Gastrocnemius medialis (tissue), 4 donors: ENCODE measurements at regions of chrX and their contacts with region 1.

Region 1: DNA sequence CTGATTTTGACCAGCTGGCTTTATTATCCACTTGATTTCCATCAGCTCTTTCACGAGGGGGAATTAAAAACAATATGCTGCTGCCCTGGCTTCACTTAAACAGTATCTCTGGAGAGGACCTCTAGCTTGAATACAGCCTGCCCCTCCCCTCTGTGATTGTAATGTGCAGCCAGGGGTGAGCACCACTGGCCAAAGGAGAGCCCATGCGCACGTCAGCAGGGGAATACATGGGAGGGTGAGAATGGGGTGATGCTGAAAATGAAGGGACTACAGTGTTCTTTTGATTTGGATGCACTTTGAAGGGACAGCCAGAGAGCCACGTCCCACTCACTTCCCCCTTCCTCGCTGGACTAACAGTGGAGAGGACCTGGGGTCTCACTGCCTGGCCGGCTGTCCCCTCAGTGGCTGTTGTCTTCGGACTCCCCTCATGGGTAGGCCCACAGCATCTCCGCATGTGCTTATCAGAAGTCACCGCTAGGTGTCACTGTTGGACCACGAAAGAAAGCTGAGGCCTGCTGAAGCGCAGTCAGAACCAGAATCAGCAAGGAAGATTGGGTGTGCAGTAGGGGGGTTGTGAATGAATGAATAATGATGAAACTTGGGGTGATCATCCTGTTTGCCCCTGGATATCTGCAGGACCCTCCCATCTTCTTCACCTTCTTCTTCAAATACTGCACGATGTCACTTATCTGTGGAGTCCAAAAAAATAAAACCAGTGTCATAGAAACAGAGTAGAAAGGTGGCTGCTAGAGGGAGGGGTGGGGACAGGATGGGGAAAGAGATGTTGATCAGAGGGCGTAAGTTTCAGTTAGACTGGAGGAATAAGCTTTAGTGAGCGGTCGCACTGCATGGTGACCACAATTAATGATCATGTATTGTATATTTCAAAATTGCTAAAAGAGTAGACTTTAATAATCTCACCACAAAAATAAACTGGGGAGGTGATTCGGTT is 32.8 kb downstream of the CLCN4 start:
- DNase-seq: peak; percentile 34 to 48
- ATAC-seq: peak; percentile 75 to 91
- H3K4me3 ChIP-seq: no peak overlapping the region
- H3K27ac ChIP-seq: peak overlapping the region in 1 of 4 donors; percentile 52
- H3K4me1 ChIP-seq: peaks cover 0 to 2% of the 10 kb centered on the region in 2 donors
- H3K27me3 ChIP-seq: no peaks in the 10 kb centered on the region
- CTCF ChIP-seq: peak in 4 of 5 experiments; percentile 62 to 86 (median 84)
- POLR2A ChIP-seq: no peak

Region 2: GRCh38 chrX:9865804-9866471 is 323.7 kb before region 1 on chrX:
- in situ Hi-C with region 1: no loop called
- intact Hi-C with region 1: no loop called
- DNase-seq: no peak
- ATAC-seq: no peak
- H3K4me3 ChIP-seq: no peak overlapping the region
- H3K27ac ChIP-seq: no peak overlapping the region
- H3K4me1 ChIP-seq: no peaks in the 10 kb centered on the region
- H3K27me3 ChIP-seq: no peaks in the 10 kb centered on the region
- CTCF ChIP-seq: no peak
- POLR2A ChIP-seq: no peak

Region 3: DNA sequence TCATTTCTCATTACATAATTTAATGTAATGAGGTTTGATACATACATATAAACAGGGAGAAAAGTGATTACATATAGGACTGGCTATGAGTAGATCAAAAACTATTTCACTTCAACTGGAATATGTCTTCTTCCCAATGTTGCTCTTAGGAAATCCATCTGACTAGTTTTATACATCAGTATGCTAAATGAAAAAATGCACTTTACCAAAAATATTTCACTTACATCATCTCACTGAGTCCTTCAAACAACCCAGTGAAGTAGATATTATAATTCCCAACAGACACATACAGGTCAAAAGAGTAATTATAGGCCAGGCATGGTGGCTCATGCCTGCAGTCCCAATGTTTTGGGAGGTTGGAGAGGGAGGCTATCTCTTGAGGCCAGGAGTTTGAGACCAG is 214.8 kb after region 1 on chrX:
- in situ Hi-C with region 1: no loop called
- intact Hi-C with region 1: no loop called
- DNase-seq: no peak
- ATAC-seq: no peak
- H3K4me3 ChIP-seq: no peak overlapping the region
- H3K27ac ChIP-seq: no peak overlapping the region
- H3K4me1 ChIP-seq: no peaks in the 10 kb centered on the region
- H3K27me3 ChIP-seq: no peaks in the 10 kb centered on the region
- CTCF ChIP-seq: no peak
- POLR2A ChIP-seq: no peak

Region 4: DNA sequence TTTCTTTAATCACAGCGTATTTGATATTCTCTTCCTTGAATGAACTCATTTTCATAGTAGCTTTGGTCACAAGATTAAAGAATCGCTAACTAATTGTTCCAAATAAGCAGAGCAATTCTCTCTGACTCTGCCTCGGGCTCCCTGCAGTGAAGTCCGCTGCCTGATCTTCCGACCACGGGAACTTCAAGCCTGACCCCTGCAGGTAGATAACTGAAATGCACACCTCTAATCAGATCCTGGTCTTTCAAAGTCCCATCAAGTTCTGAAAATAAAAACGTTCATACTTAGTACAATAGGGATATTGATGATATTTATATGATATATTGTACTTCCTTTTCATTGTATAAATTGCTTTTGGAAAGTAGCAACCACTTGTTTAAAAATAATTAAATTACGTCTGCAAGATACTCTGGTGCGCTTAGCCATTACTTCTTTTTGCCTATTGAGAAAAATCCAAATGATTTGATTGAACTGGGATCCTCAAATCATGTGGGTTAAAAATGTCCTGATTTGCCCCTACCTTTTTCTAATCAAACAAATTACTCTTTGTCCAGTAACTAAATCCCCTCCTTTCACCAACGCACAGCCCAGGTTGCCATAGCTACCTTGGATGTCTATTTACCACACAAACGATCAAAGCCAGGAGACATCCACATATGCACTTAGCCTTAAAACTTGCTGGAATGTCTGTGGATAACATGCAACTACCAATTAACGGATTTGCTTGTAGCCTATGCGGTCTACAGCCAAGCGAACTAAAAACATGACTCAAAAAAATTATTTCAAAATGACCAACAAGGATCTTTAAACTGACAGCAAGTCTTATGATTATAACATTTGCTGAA is 426.6 kb after region 1 on chrX:
- in situ Hi-C with region 1: loop called (anchors 5 to 25 kb)
- intact Hi-C with region 1: loop called (anchors 1 kb)
- DNase-seq: peak; percentile 5 to 16
- ATAC-seq: peak; percentile 53 to 56
- H3K4me3 ChIP-seq: peak overlapping the region in 2 of 4 donors; percentile 4 to 31
- H3K27ac ChIP-seq: no peak overlapping the region
- H3K4me1 ChIP-seq: no peaks in the 10 kb centered on the region
- H3K27me3 ChIP-seq: peaks cover 2 to 22% (median 11%) of the 10 kb centered on the region in 3 donors
- CTCF ChIP-seq: peak; percentile 18 to 63 (median 40)
- POLR2A ChIP-seq: no peak

Region 5: DNA sequence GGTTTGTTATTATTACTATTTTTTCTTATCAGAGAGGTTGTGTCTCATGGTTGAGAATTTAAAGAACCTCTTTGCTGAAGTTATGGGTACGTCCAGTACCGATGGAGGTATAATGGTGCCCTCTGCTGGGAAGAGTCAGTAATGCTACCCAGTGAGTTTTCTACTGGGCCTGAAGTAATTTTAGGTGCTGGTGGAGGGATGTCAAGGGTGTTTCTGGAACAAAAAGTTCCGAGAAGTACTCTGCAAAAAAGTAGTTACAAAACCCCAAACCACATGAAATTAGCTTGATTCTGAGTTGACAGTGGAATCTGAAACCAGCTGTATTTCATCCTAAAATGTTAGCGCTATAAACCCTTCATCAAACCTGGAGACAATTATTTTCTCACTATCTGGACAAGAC is 533.3 kb after region 1 on chrX:
- in situ Hi-C with region 1: no loop called
- intact Hi-C with region 1: loop called (anchors 1 kb)
- DNase-seq: peak; percentile 5 to 38
- ATAC-seq: peak; percentile 65 to 69
- H3K4me3 ChIP-seq: no peak overlapping the region
- H3K27ac ChIP-seq: no peak overlapping the region
- H3K4me1 ChIP-seq: no peaks in the 10 kb centered on the region
- H3K27me3 ChIP-seq: no peaks in the 10 kb centered on the region
- CTCF ChIP-seq: peak in 4 of 5 experiments; percentile 39 to 61 (median 49)
- POLR2A ChIP-seq: no peak

Region 6: DNA sequence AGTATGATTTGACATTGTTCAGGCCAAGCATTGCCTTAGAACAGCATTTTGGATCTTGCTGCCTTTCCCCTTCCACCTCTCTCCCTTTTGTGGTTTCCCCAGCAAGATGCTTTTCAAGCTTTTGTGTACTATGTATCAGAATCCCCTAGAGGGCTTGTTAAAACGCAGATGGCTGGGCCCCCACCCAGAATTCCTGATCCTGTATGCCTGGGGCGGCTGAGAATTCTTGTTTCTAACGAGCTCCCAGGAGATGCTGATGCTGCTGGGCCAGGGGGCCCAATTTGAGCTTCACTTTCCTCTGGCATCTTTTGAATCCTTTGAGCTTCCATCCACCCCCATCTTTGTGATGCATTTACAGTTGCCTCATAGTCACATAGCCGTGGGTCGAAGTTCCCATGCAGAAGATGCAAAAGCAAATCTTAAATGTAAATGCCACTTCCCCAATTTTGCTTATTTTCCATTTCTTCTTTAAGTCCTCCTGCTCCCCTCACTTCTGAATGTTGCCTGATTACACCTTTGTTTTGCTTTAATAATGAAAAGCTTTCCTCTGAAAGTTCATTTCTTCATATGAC is 940.0 kb after region 1 on chrX:
- in situ Hi-C with region 1: loop called (anchors 10 to 25 kb)
- intact Hi-C with region 1: loop called (anchors 5 kb)
- DNase-seq: no peak
- ATAC-seq: no peak
- H3K4me3 ChIP-seq: no peak overlapping the region
- H3K27ac ChIP-seq: no peak overlapping the region
- H3K4me1 ChIP-seq: no peaks in the 10 kb centered on the region
- H3K27me3 ChIP-seq: no peaks in the 10 kb centered on the region
- CTCF ChIP-seq: no peak
- POLR2A ChIP-seq: no peak

Region 7: GRCh38 chrX:11143931-11144678 is 954.5 kb after region 1 on chrX:
- in situ Hi-C with region 1: loop called in 2 of 4 experiments (anchors 10 to 25 kb)
- intact Hi-C with region 1: no loop called
- DNase-seq: peak; percentile 5 to 22
- ATAC-seq: peak; percentile 58 to 89
- H3K4me3 ChIP-seq: no peak overlapping the region
- H3K27ac ChIP-seq: no peak overlapping the region
- H3K4me1 ChIP-seq: no peaks in the 10 kb centered on the region
- H3K27me3 ChIP-seq: no peaks in the 10 kb centered on the region
- CTCF ChIP-seq: peak; percentile 40 to 65 (median 59)
- POLR2A ChIP-seq: no peak